ENCODE measurements at regions of chr5 and their contacts with region 1.

Region 1: GRCh38 chr5:139560752-139561654 is at the start of gene UBE2D2:
- DNase-seq: peak; percentile 99
- H3K4me3 Mint-ChIP-seq: peak within 1 kb of the TSS; percentile 86
- H3K27ac Mint-ChIP-seq: peak within 1 kb of the TSS; percentile 98
- H3K4me1 Mint-ChIP-seq: peaks cover 18% of the 10 kb centered on the region
- H3K27me3 Mint-ChIP-seq: no peaks in the 10 kb centered on the region
- CTCF ChIP-seq: no peak
- total RNA-seq, gene UBE2D2: 179 and 187 TPM in 2 replicates

Region 2: GRCh38 chr5:139524932-139525585 is 35.9 kb before region 1 on chr5:
- CTCF ChIA-PET with region 1: no interaction called
- intact Hi-C with region 1: loop called (anchors 5 kb)
- DNase-seq: no peak
- H3K4me3 Mint-ChIP-seq: no peak overlapping the region
- H3K27ac Mint-ChIP-seq: no peak overlapping the region
- H3K4me1 Mint-ChIP-seq: peaks cover 22% of the 10 kb centered on the region
- H3K27me3 Mint-ChIP-seq: no peaks in the 10 kb centered on the region
- CTCF ChIP-seq: no peak

Region 3: GRCh38 chr5:140165101-140165922 is 604.3 kb after region 1 on chr5:
- CTCF ChIA-PET with region 1: no interaction called
- intact Hi-C with region 1: no loop called
- DNase-seq: peak; percentile 71
- H3K4me3 Mint-ChIP-seq: peak overlapping the region; percentile 35
- H3K27ac Mint-ChIP-seq: peak overlapping the region; percentile 81
- H3K4me1 Mint-ChIP-seq: peaks cover 52% of the 10 kb centered on the region
- H3K27me3 Mint-ChIP-seq: no peaks in the 10 kb centered on the region
- CTCF ChIP-seq: no peak

Measured in Calu3 (cell line).